ENCODE measurements at regions of chr17 and their contacts with region 1.

Region 1: GRCh38 chr17:45218895-45219661 is 2.6 kb upstream of the FMNL1 start:
- DNase-seq: peak; percentile 73
- H3K4me3 Mint-ChIP-seq: peak overlapping the region; percentile 93
- H3K27ac Mint-ChIP-seq: peak overlapping the region; percentile 80
- H3K4me1 Mint-ChIP-seq: peaks cover 42% of the 10 kb centered on the region
- H3K27me3 Mint-ChIP-seq: no peaks in the 10 kb centered on the region

Region 2: GRCh38 chr17:45021607-45022287 is 197.3 kb before region 1 on chr17:
- intact Hi-C with region 1: no loop called
- DNase-seq: peak; percentile 62
- H3K4me3 Mint-ChIP-seq: no peak overlapping the region
- H3K27ac Mint-ChIP-seq: no peak overlapping the region
- H3K4me1 Mint-ChIP-seq: peaks cover 22% of the 10 kb centered on the region
- H3K27me3 Mint-ChIP-seq: peaks cover 30% of the 10 kb centered on the region

Region 3: GRCh38 chr17:45235416-45236281 is 16.6 kb after region 1 on chr17:
- intact Hi-C with region 1: loop called (anchors 1 kb)
- DNase-seq: no peak
- H3K4me3 Mint-ChIP-seq: peak overlapping the region; percentile 28
- H3K27ac Mint-ChIP-seq: peak overlapping the region; percentile 38
- H3K4me1 Mint-ChIP-seq: peaks cover 77% of the 10 kb centered on the region
- H3K27me3 Mint-ChIP-seq: no peaks in the 10 kb centered on the region

Region 4: DNA sequence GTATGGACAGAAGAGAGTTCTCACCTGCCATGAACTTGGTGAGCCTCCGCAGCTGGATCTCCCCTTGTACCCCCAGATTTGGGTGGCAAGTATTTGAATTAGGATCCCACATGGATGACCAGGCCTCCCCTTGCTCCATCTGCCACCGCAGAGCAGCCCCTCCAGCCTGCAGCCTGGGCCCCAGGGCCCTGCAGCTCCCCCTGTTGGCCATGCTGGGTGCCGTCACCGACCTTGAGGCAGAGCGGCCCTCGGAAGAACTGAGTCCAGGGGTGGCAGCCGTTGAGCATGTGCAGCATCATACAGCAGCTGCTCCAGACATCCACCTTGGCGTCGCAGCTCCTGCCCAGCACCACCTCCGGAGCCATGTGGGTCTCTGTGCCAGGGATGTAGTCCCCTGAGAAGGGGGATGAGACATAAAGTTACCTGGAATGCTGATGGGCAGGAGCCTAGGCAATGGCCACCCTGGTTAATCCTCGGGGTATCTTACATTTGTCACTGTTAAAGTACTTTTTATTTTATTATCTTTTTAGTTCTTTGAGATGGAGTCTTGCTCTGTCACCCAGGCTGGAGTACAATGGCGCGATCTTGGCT is 51.8 kb after region 1 on chr17:
- intact Hi-C with region 1: loop called (anchors 1 kb)
- DNase-seq: peak; percentile 29
- H3K4me3 Mint-ChIP-seq: no peak overlapping the region
- H3K27ac Mint-ChIP-seq: peak overlapping the region; percentile 18
- H3K4me1 Mint-ChIP-seq: peaks cover 20% of the 10 kb centered on the region
- H3K27me3 Mint-ChIP-seq: no peaks in the 10 kb centered on the region

Region 5: GRCh38 chr17:46811978-46812583 is 1593.0 kb after region 1 on chr17:
- intact Hi-C with region 1: no loop called
- DNase-seq: no peak
- H3K4me3 Mint-ChIP-seq: no peak overlapping the region
- H3K27ac Mint-ChIP-seq: no peak overlapping the region
- H3K4me1 Mint-ChIP-seq: no peaks in the 10 kb centered on the region
- H3K27me3 Mint-ChIP-seq: peaks cover 42% of the 10 kb centered on the region